ENCODE measurements at regions of chr12 and their contacts with region 1.

Region 1: GRCh38 chr12:96194971-96195844 is 1.0 kb downstream of the ELK3 start:
- DNase-seq: peak; percentile 87
- ATAC-seq: peak; percentile 57
- H3K4me3 ChIP-seq: peak overlapping the region; percentile 82 to 95 (median 90)
- H3K4me3 Mint-ChIP-seq: peak overlapping the region; percentile 97
- H3K27ac ChIP-seq: peak overlapping the region; percentile 70 to 97
- H3K27ac Mint-ChIP-seq: peak overlapping the region; percentile 98
- H3K4me1 ChIP-seq: peaks cover 56 to 65% of the 10 kb centered on the region in 2 donors
- H3K4me1 Mint-ChIP-seq: peaks cover 68% of the 10 kb centered on the region
- H3K27me3 ChIP-seq: no peaks in the 10 kb centered on the region
- H3K27me3 Mint-ChIP-seq: no peaks in the 10 kb centered on the region
- CTCF ChIP-seq: no peak

Region 2: GRCh38 chr12:95942524-95943329 is 252.5 kb before region 1 on chr12 and contains the start of gene CCDC38:
- CTCF ChIA-PET with region 1: interaction called, 3 read pairs
- POLR2A ChIA-PET with region 1: no interaction called
- intact Hi-C with region 1: loop called (anchors 2 kb)
- DNase-seq: peak; percentile 85
- ATAC-seq: peak; percentile 88
- H3K4me3 ChIP-seq: peak within 1 kb of the TSS; percentile 68 to 94 (median 89)
- H3K4me3 Mint-ChIP-seq: peak within 1 kb of the TSS; percentile 98
- H3K27ac ChIP-seq: peak within 1 kb of the TSS; percentile 71 to 87
- H3K27ac Mint-ChIP-seq: peak within 1 kb of the TSS; percentile 92
- H3K4me1 ChIP-seq: peaks cover 9 to 11% of the 10 kb centered on the region in 2 donors
- H3K4me1 Mint-ChIP-seq: peaks cover 10% of the 10 kb centered on the region
- H3K27me3 ChIP-seq: no peaks in the 10 kb centered on the region
- H3K27me3 Mint-ChIP-seq: no peaks in the 10 kb centered on the region
- CTCF ChIP-seq: no peak
- total RNA-seq, gene CCDC38: 1.00 and 1.3 TPM in 2 replicates

Region 3: DNA sequence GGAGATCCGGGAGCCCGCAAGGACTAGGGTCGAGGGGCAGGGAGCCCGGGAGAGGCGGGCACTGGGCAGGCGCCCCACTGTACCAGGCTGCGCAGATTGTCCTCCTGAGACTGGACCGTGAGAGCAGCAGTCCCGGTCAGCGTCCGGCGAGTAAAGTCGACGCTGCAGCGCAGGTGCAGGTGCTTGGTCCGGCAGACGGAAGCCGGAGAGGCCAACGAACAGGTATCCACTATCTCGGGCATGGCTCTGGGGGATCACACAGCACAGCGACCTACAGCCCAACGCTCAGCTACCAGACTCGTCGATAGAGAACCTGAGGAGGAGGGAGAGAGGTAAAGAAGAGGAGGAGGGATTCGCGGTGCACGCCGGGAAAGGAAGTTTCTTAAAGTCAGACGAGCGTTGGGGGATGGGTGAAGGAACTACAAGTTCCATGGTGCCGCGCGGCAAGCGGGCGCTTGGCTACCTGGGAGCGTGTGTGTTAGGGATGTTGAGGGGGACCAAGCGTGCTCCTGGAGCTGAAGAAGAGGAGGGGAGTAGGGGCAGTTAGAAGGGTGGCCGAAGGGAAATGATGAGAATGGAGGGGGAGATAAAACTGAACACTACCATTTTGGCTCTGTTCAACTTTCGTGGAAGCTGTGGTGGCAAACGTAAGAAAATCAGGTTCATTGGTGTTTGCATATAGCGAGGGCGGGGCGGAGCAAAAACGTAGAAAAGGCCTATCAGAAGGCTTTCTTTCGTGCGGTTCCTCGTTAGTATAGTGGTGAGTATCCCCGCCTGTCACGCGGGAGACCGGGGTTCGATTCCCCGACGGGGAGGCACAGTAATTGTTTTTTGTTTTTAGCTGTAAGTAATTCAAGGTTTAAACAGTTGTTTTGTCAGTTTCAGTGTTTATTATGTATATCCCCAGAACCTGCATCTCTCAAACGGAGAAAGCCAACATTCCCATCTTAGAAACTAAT is 159.7 kb before region 1 on chr12 and contains the start of gene LTA4H:
- CTCF ChIA-PET with region 1: interaction called, 3 read pairs
- POLR2A ChIA-PET with region 1: no interaction called
- intact Hi-C with region 1: loop called (anchors 5 kb)
- DNase-seq: peak; percentile 100
- ATAC-seq: peak; percentile 90
- H3K4me3 ChIP-seq: peak within 1 kb of the TSS; percentile 62 to 99 (median 92)
- H3K4me3 Mint-ChIP-seq: no peak within 1 kb of the TSS
- H3K27ac ChIP-seq: peak within 1 kb of the TSS; percentile 64 to 69
- H3K27ac Mint-ChIP-seq: no peak within 1 kb of the TSS
- H3K4me1 ChIP-seq: peaks cover 40 to 44% of the 10 kb centered on the region in 2 donors
- H3K4me1 Mint-ChIP-seq: peaks cover 15% of the 10 kb centered on the region
- H3K27me3 ChIP-seq: no peaks in the 10 kb centered on the region
- H3K27me3 Mint-ChIP-seq: no peaks in the 10 kb centered on the region
- CTCF ChIP-seq: no peak
- total RNA-seq, gene LTA4H: 158 and 167 TPM in 2 replicates

Region 4: GRCh38 chr12:96140174-96140573 is 55.0 kb before region 1 on chr12:
- CTCF ChIA-PET with region 1: no interaction called
- POLR2A ChIA-PET with region 1: no interaction called
- intact Hi-C with region 1: loop called (anchors 10 kb)
- DNase-seq: no peak
- ATAC-seq: no peak
- H3K4me3 ChIP-seq: no peak overlapping the region
- H3K4me3 Mint-ChIP-seq: no peak overlapping the region
- H3K27ac ChIP-seq: no peak overlapping the region
- H3K27ac Mint-ChIP-seq: no peak overlapping the region
- H3K4me1 ChIP-seq: peaks cover 20 to 26% of the 10 kb centered on the region in 2 donors
- H3K4me1 Mint-ChIP-seq: peaks cover 33% of the 10 kb centered on the region
- H3K27me3 ChIP-seq: no peaks in the 10 kb centered on the region
- H3K27me3 Mint-ChIP-seq: no peaks in the 10 kb centered on the region
- CTCF ChIP-seq: no peak

Region 5: DNA sequence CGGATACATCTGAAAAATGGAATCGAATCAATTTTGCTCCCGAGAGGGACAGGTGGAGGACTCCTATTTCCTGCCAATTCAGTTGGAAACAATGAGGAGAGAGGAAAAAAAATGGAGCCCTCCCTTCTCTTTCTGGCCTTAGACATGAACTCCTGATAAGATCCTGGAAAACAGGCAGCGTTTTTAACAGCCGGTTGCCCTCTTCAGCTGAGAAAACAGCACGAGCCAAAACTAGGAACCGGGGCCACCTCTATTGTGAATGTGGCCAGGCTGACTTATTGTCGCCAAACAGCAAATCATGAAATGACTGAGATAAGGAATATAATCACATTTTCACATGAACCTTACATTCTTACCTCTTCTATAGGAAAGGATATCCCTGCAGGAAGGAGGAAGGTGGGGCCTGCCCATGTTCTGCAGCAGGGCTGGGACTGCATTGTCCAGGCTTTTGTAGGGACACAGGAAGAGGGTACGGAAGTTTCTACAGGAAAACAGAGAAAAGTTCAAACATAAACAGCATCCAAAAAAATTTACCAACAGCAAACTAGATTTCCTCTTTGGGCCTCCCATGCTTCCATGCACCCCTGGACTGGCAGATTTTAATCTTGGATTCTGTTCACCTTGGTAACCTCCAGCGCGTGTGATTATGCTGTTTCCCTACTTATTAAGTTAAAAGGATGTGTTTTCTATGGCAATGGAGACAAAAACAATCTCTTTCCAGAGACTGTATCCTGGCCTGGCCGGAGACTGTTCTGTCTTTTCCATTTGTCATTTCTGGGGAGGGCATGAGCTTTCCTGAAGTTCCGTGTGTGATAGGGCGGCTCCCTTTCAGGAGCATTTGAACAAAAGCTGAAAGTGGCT is 30.0 kb before region 1 on chr12:
- CTCF ChIA-PET with region 1: no interaction called
- POLR2A ChIA-PET with region 1: no interaction called
- intact Hi-C with region 1: no loop called
- DNase-seq: no peak
- ATAC-seq: no peak
- H3K4me3 ChIP-seq: no peak overlapping the region
- H3K4me3 Mint-ChIP-seq: no peak overlapping the region
- H3K27ac ChIP-seq: no peak overlapping the region
- H3K27ac Mint-ChIP-seq: no peak overlapping the region
- H3K4me1 ChIP-seq: peaks cover under 1 to 3% of the 10 kb centered on the region in 2 donors
- H3K4me1 Mint-ChIP-seq: peaks cover 3% of the 10 kb centered on the region
- H3K27me3 ChIP-seq: no peaks in the 10 kb centered on the region
- H3K27me3 Mint-ChIP-seq: no peaks in the 10 kb centered on the region
- CTCF ChIP-seq: no peak

Region 6: GRCh38 chr12:96215919-96216273 is 20.7 kb after region 1 on chr12:
- CTCF ChIA-PET with region 1: interaction called, 13 read pairs
- POLR2A ChIA-PET with region 1: interaction called, 44 read pairs
- intact Hi-C with region 1: loop called (anchors 1 kb)
- DNase-seq: no peak
- ATAC-seq: no peak
- H3K4me3 ChIP-seq: no peak overlapping the region
- H3K4me3 Mint-ChIP-seq: no peak overlapping the region
- H3K27ac ChIP-seq: peak overlapping the region in 1 of 2 donors; percentile 20
- H3K27ac Mint-ChIP-seq: peak overlapping the region; percentile 1
- H3K4me1 ChIP-seq: peaks cover 41 to 45% of the 10 kb centered on the region in 2 donors
- H3K4me1 Mint-ChIP-seq: peaks cover 50% of the 10 kb centered on the region
- H3K27me3 ChIP-seq: no peaks in the 10 kb centered on the region
- H3K27me3 Mint-ChIP-seq: no peaks in the 10 kb centered on the region
- CTCF ChIP-seq: no peak

Measured in B cell (primary cell).